Sciatic nerve (tissue), 2 donors: ENCODE measurements at regions of chr11 and their contacts with region 1.

Region 1: DNA sequence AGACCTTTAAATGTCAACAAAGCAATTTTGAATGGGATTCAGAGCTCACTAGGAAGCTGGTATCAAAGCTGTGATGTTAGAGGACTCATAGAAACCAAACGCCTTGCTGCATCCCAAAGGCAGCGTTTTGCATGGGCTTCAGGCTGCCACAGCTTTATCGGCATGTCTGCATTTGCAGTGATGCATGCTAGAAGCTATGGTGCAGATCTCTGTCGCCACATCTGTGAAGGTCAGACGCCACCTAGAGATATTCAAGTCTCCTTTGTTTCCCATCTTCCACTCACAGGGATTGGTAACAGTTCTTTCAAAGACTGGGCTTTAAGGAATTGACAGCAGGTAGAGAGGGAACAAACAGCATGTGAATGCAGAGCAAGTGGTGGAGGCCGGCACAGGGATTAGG is 47.8 kb downstream of the NTM start:
- DNase-seq: no peak
- ATAC-seq: no peak

Region 2: DNA sequence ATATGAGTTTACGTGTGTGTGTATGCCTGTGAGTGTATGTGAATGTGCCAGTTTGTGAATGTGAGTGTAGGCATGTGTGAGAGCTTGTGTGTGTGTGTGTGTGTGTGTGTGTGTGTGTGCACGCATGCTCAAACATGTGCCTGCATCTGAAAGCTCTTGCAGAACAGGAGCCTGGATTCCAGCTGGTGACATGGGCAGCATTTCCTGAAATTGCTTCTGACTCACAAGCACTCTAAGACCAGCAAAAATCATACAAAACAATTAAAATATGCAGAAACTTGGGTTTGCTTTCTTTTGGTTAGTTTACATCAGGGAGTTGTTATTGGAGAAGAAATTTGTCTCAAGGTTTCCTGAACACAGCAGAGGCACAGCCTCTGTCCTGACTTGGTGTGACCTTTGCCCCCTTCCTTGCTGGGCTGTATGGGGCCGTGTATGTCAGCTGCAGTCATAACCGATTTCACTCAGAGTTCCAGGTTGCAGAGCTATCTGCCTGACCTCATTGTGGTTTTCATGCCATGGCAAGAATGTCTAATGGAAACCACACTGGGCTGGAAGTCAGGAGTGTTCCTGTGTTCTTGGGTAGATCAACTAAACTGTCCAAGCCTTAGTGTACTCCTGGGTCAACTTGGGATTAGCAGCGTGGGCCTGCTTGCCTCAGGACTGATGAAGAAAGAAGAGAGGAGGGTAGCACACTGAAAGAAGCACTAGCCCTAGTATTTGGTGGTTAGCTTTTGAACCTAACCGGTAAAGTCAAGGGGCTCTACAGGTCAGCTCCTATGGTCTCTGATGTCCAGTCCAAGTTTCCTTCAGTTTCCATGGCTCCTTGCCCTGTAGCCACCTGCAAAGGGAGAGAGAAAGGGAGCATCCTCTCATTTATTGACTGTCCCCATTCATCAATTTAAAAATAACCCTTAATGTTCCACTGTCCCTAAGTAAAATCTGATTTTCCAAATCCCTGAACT is 645.6 kb before region 1 on chr11:
- intact Hi-C with region 1: loop called (anchors 10 kb)
- DNase-seq: peak; percentile 61
- ATAC-seq: peak; percentile 94

Region 3: GRCh38 chr11:132008872-132009271 is 590.7 kb after region 1 on chr11:
- intact Hi-C with region 1: no loop called
- DNase-seq: no peak
- ATAC-seq: no peak

Region 4: DNA sequence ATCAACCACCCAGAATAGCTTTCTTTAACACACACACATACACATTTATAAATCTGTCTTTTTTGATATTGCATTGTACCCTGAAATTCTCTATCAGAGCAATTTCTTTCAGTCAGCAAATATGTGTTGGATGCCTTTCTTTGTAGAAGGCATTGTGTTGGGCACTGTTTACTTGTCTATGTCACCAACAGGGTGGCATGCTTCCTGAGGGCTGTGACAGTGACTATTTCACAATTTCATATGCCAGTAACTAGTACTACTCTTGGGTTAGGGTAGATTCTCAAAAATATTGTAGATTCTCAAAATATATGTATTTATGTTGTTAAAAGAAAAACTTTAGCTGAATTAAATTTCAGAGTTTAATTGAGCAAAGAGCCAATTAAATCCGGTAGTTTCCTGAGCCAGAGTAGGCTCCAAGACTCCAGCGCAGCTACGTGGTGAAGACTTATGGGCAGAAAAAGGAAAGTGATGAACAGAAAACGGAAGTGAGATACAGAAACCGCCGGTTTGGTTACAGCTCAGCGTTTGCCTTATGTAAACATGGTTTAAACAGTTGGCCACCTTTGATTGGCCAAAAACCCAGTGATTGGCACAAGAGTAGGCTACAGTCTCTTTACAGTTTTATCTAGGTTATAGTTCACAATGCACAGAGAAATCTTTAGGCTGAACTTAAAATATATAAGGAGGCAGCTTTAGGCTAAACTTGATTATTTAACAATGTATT is 675.5 kb after region 1 on chr11:
- intact Hi-C with region 1: no loop called
- DNase-seq: no peak
- ATAC-seq: no peak

Region 5: GRCh38 chr11:133219543-133219942 is 1801.4 kb after region 1 on chr11:
- intact Hi-C with region 1: no loop called
- DNase-seq: no peak
- ATAC-seq: no peak